HepG2 (cell line): ENCODE measurements at regions of chr7 and their contacts with region 1.

Region 1: DNA sequence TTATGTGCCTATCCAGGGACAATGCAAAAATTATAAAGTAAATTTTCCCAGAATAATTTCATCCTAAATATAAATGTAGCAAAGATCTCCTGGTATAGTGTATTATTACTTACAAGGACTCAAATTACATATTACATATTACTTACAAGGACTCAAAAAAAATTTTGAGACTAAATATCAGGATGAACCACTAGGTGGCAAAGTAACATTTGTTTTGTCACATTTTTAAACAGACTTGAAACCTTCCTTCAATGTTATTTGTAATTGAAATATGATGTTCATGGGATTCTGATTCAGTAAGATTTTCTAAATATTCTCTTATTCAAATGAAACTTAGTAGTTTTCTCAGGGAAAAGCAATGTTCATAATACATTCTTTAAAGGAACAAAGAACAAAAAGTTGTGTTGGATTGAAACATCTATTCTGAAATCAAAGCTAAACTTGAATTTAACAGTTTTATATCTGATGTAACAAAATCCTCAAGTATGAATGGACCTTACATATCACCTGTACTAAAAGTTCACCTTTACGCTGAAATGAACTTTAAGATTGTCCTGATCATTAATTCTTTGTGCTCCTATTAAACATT is 74.3 kb upstream of the GNAI1 start:
- DNase-seq: peak; percentile 41
- ATAC-seq: no peak
- H3K4me3 ChIP-seq: no peak overlapping the region
- H3K27ac ChIP-seq: no peak overlapping the region
- H3K4me1 ChIP-seq: no peaks in the 10 kb centered on the region
- H3K27me3 ChIP-seq: no peaks in the 10 kb centered on the region
- CTCF ChIP-seq: peak; percentile 30; the same call in 1 of the 2 replicates
- EP300 ChIP-seq: no peak
- POLR2A ChIP-seq: no peak
- RAD21 ChIP-seq: no peak

Region 2: GRCh38 chr7:80288175-80289122 is 228.1 kb after region 1 on chr7:
- CTCF ChIA-PET with region 1: interaction called, 8 read pairs
- POLR2A ChIA-PET with region 1: no interaction called
- in situ Hi-C with region 1: loop called (anchors 10 kb)
- intact Hi-C with region 1: loop called (anchors 1 kb)
- DNase-seq: peak; percentile 15
- ATAC-seq: peak; percentile 75
- H3K4me3 ChIP-seq: no peak overlapping the region
- H3K27ac ChIP-seq: no peak overlapping the region
- H3K4me1 ChIP-seq: no peaks in the 10 kb centered on the region
- H3K27me3 ChIP-seq: no peaks in the 10 kb centered on the region
- CTCF ChIP-seq: peak; percentile 52
- EP300 ChIP-seq: no peak
- POLR2A ChIP-seq: no peak
- RAD21 ChIP-seq: peak; percentile 33; the same call in 1 of the 2 replicates

Region 3: DNA sequence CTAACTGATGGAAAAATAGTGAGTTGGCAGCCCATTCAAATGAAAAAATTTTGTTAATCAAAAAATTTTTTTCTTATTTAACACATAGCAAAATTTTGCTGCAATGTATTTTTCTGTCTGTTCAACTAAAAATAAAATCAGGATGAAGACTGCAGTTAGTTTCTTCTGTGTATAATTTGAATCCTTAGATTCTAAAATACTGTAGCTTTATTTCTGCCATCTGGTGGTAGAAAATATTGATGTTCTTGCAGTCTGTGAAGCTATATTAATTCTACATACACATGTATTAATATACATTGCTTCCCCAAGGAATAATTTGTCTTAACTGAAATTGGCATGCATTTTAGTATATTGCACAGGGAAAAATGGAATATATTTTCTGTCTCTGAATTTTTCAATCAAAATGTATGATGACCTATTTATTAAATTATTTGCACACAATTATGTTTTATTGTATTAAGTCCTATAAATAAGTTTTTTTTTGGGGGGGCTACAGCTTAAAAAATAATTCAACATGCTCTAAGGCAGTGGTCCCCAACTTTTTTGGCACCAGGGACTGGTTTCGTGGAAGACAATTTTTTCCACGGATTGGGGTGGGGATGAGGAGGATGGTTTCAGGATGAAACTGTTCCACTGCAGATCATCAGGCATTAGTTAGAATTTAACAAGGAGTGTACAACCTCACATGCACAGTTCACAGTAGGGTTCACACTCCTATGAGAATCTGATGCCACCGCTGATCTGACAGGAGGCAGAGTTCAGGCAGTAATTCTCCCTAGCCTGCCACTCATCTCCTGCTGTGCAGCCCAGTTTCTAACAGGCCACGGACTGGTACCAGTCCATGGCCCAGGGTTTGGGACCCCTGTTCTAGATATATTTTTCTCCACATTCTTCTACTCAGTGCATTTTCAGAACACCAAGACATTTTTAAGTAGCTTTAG is 332.2 kb after region 1 on chr7:
- CTCF ChIA-PET with region 1: interaction called, 4 read pairs
- POLR2A ChIA-PET with region 1: no interaction called
- in situ Hi-C with region 1: no loop called
- intact Hi-C with region 1: loop called (anchors 1 kb)
- DNase-seq: peak; percentile 17
- ATAC-seq: peak; percentile 78
- H3K4me3 ChIP-seq: no peak overlapping the region
- H3K27ac ChIP-seq: no peak overlapping the region
- H3K4me1 ChIP-seq: peaks cover 18% of the 10 kb centered on the region
- H3K27me3 ChIP-seq: no peaks in the 10 kb centered on the region
- CTCF ChIP-seq: 0 out of 2 replicates have a peak, but pooled peaks have one; percentile 19
- EP300 ChIP-seq: no peak
- POLR2A ChIP-seq: no peak
- RAD21 ChIP-seq: no peak

Region 4: GRCh38 chr7:80453699-80454340 is 393.5 kb after region 1 on chr7:
- CTCF ChIA-PET with region 1: interaction called, 5 read pairs
- POLR2A ChIA-PET with region 1: no interaction called
- in situ Hi-C with region 1: no loop called
- intact Hi-C with region 1: loop called (anchors 1 kb)
- DNase-seq: peak; percentile 12
- ATAC-seq: no peak
- H3K4me3 ChIP-seq: no peak overlapping the region
- H3K27ac ChIP-seq: no peak overlapping the region
- H3K4me1 ChIP-seq: peaks cover 24% of the 10 kb centered on the region
- H3K27me3 ChIP-seq: no peaks in the 10 kb centered on the region
- CTCF ChIP-seq: peak; percentile 55
- EP300 ChIP-seq: no peak
- POLR2A ChIP-seq: no peak
- RAD21 ChIP-seq: no peak

Region 5: GRCh38 chr7:80659120-80660055 is 599.1 kb after region 1 on chr7:
- CTCF ChIA-PET with region 1: no interaction called
- POLR2A ChIA-PET with region 1: no interaction called
- in situ Hi-C with region 1: no loop called
- intact Hi-C with region 1: loop called (anchors 10 kb)
- DNase-seq: peak; percentile 26
- ATAC-seq: no peak; the same call in 2 of the 3 replicates
- H3K4me3 ChIP-seq: no peak overlapping the region
- H3K27ac ChIP-seq: no peak overlapping the region
- H3K4me1 ChIP-seq: peaks cover 22% of the 10 kb centered on the region
- H3K27me3 ChIP-seq: no peaks in the 10 kb centered on the region
- CTCF ChIP-seq: peak; percentile 60
- EP300 ChIP-seq: no peak
- POLR2A ChIP-seq: no peak
- RAD21 ChIP-seq: no peak